Activated naive CD4-positive, alpha-beta T cell treated with anti-CD3 and anti-CD28 coated beads, Interleukin-2, amount 10 ng/mL, durations not matched to agents 7 days and 5 days (primary cell): ENCODE measurements at regions of chr22 and their contacts with region 1.

Region 1: DNA sequence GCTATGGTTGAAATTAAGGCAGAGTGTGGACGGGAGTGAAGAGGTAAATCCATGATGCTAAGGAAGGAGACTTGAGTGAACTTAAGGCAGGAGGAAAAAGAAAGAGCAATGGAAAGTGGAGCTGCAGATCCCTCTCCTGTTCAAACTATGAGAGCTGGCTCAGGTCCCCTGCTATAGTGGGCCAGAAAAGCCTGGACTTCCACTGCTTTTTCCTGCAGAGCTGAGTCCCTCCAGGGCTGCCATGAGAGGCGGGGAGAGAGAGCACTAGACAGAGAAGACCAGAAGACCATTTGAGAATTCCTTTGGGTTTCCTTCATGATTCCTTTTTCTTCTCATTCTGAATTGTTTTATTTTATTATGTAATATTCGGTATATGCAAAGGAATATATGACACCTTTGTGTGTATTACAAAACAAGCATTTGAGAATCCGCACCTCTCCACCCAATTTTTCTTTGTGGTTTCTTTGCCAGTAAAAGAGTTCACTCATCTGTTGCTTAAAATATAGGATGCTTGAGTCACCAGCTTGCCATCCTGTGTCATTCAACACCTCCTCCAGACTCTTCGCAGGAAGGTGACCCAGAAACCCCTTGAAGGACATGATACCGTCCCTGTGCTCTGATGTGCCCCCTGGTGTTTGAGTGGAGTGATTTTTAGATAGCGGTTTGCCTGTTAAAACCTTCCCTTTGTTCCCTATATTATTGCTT is 24.4 kb downstream of the SREBF2 start:
- DNase-seq: peak; percentile 76
- H3K4me3 Mint-ChIP-seq: no peak overlapping the region
- H3K27ac Mint-ChIP-seq: peak overlapping the region; percentile 89
- H3K4me1 Mint-ChIP-seq: peaks cover 61% of the 10 kb centered on the region
- H3K27me3 Mint-ChIP-seq: no peaks in the 10 kb centered on the region

Region 2: DNA sequence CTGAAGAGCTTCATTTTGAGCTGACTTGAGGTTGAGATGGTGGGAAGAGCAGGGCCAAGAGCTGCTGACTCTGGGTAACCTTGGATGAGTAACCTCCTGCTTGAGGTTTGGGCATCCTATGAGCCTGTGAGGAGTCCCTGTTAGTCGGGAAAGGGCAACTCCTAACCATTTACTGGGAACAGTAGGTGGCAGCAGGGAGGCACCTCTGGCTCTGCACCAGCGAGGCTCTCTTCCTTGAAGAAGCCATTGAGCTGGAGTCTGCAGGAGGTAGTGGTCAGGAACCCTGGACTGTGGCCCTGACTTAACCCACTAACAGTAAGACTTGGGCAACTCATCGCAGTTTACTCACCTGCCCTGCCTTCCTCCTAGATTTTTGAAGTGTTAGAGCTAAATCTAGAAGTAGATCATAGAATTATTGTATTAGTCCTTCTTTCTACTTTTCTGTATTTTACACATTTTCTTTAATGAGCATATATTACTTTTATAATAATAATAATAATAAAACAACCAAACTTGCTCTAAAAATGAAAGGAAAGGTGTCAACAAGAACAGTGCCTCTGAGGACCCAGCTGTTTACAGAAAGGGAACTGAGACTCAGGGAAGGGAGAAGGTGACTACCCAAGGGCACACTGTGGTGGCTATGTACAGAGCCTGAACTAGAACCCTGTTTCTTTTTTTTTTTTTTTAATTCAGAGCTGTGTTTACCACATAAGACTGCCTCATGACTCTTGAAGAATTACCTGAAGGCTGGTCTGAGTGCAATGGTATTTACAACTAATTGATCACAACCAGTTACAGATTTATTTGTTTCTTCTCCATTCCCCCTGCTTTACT is 110.5 kb before region 1 on chr22:
- CTCF ChIA-PET with region 1: interaction called, 13 read pairs
- DNase-seq: peak; percentile 70
- H3K4me3 Mint-ChIP-seq: no peak overlapping the region
- H3K27ac Mint-ChIP-seq: no peak overlapping the region
- H3K4me1 Mint-ChIP-seq: peaks cover 2% of the 10 kb centered on the region
- H3K27me3 Mint-ChIP-seq: peaks cover 57% of the 10 kb centered on the region

Region 3: DNA sequence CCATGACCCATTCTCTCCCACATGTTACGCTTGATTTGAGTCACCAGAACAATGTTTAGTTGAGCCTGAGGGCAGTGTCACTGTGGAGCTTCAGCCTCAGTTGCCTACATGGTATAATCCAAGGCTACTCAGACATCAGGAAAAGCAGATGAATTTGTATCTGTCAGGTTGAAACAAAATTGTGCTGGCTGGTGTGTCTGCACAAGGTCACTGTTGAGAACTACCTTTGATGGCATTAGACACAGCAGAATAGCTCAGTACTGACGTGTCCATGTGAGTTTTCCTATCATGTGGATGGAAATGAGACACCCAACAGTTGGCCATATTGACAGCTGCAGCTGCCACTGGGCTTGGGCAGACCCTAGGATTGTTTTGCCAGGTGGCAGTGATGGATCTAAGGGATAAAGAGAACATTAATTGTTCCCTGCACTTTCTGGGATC is 41.1 kb before region 1 on chr22:
- CTCF ChIA-PET with region 1: no interaction called
- DNase-seq: no peak
- H3K4me3 Mint-ChIP-seq: no peak overlapping the region
- H3K27ac Mint-ChIP-seq: no peak overlapping the region
- H3K4me1 Mint-ChIP-seq: no peaks in the 10 kb centered on the region
- H3K27me3 Mint-ChIP-seq: no peaks in the 10 kb centered on the region

Region 4: DNA sequence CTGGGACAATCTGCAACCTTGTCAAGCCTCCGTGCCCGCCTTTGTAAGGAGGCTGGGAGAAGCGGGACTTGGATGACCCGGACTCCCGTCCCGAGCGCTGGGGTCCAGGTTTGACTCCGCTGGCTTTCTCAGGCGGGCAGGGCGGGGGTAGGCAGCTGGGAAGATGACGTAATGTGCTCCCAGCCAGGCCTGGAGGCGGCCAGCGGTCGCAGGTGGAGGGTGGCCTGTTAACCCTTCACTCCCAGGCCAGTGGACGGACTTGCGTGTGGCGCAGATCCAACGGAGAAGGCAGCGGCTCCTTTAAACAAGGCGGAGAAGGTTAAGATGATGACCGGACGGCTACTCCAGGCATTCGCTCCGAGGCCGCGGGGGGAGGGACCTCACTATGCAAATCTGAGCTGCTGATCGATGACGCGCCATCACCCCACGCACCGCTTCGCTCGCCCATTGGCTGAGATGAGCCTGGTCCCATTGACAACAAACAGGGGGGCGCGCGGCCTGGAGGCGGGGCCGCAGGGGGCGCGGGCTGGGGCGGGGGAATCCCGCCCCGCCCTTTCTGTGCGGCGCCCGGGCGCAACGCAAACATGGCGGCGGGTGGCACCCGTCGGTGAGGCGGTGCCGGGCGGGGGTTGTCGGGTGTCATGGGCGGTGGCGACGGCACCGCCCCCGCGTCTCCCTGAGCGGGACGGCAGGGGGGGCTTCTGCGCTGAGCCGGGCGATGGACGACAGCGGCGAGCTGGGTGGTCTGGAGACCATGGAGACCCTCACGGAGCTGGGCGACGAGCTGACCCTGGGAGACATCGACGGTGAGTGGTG is 24.5 kb before region 1 on chr22 and contains the start of gene SREBF2:
- CTCF ChIA-PET with region 1: interaction called, 25 read pairs
- DNase-seq: peak; percentile 100
- H3K4me3 Mint-ChIP-seq: peak within 1 kb of the TSS; percentile 92
- H3K27ac Mint-ChIP-seq: peak within 1 kb of the TSS; percentile 99
- H3K4me1 Mint-ChIP-seq: peaks cover 45% of the 10 kb centered on the region
- H3K27me3 Mint-ChIP-seq: no peaks in the 10 kb centered on the region

Region 5: DNA sequence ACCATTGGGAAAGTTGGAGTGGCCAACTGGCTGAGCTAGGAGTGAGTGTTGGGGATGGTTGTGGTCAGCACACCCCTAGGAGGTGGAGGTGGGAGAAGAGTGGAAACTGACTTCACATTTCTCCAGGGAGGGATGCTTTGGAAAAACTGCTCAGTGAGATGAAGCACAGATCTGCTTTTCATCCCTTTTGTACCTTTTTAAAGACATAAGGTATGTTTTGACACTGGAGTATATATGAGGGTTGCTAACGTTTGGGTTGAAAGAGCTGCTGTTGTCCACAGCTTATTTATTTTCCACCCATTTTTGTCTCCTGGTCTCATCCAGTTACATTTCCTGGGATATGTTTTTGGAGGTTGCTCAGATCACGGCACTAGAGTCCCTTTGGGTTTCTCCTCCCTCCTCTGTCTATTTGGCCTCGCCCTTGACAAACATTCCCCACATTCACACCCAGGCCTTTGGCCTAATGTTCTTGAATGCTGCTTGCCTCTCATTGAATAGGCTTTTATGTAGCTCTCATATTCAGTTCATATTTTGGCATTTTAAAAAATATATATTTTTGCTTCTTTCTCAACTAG is 16.1 kb before region 1 on chr22:
- CTCF ChIA-PET with region 1: interaction called, 25 read pairs
- DNase-seq: no peak
- H3K4me3 Mint-ChIP-seq: no peak overlapping the region
- H3K27ac Mint-ChIP-seq: no peak overlapping the region
- H3K4me1 Mint-ChIP-seq: peaks cover 75% of the 10 kb centered on the region
- H3K27me3 Mint-ChIP-seq: no peaks in the 10 kb centered on the region